AG04449 (cell line): ENCODE measurements at regions of chr2 and their contacts with region 1.

Region 1: DNA sequence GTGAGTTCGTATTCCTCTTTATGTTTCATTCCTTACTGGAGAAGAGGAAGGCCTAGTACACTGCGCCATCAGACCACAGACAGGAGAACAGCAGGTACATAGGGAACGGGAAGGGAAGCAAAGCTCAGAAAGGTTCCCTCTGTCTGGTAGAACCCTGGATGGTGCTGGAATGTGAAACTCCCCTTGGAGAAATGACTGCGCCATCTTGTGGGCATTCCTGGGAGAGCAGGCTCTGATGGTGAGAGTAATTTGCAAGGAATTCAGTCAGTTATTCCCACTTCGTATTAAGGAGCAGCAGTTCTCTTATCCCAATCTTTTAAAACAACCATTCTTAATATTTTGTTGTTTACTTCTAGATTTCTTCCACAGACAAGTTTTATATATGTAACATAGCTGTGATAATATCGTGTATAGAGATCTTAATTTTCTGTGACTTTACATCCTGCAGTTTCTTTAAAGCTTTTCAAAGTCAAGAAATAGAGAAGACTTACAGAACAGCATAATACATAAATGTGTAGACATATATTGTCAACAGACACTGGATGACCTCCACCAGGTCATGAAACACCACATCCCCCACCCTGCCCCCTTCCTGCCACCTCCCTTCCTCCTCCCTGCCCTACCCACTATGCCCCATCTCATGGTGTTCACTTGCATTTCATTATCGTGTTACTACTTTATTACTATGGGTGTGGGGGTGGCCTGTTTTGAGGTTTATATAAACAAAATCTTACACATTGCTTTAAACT is 83.9 kb downstream of the ARHGEF4 start:
- DNase-seq: peak; percentile 5
- H3K4me3 ChIP-seq: no peak overlapping the region
- CTCF ChIP-seq: peak; percentile 86

Region 2: DNA sequence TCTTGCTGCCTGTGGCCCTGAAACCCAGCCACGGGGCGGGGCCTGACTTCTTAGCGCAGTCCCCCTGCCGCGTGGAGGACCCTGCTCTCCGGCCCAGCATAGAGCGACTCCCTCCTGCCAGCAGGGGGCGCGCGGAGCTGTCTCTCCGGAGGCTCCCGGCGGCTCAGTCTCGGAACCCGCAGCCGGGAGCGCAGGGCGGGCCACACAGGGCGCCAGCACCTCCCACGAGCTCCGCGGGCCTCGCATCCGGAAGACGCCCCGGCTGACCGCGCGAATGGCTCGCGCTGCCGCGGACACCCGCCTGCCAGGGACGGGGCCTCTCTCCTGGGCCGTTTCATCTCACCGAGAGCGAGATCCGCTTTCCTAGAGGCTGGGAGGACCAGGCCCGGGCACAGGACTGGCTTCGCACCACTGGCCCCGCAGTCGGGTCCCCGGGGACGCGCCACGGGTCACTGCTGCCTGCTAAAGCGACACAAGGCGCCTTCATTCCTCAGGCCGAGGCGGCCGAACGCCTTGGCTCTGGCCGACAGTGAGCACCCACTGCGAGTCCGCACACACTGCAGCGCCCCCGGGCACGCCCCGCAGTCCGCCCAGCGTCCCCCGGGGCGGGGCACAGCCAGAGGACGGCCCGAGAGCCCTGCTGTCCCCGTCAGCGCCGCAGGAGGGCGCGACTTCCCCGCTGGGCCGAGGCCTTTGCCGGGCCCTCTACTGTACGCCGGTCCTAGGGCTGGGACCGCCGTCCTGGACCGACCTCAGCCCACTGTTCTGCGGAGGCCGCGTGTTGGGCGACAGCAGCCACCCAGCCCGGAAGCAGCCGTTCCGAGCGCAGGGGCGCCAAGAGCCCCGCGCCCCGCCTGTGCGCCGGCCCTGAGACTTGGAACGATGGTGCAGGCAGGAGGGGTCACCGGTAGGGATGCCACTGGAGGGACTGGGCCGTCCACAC is 122.8 kb before region 1 on chr2:
- CTCF ChIA-PET with region 1: interaction called, 51 read pairs
- POLR2A ChIA-PET with region 1: no interaction called
- DNase-seq: peak; percentile 21
- H3K4me3 ChIP-seq: peak overlapping the region; percentile 80
- CTCF ChIP-seq: peak; percentile 98